Dorsolateral prefrontal cortex (tissue), 120 donors: ENCODE measurements at regions of chr17 and their contacts with region 1.

Region 1: GRCh38 chr17:1673041-1673785 is 11.5 kb downstream of the PRPF8 start:
- DNase-seq: peak in 1 of 10 donors; percentile 28
- H3K4me3 ChIP-seq: no peak overlapping the region
- H3K27ac ChIP-seq: peak overlapping the region in 1 of 59 donors; percentile 6
- H3K27me3 ChIP-seq: no peaks in the 10 kb centered on the region
- CTCF ChIP-seq: no peak

Region 2: GRCh38 chr17:996554-997344 is 676.5 kb before region 1 on chr17 and contains the start of gene TIMM22:
- intact Hi-C with region 1: no loop called
- DNase-seq: peak; percentile 88 to 94 (median 92)
- H3K4me3 ChIP-seq: peak within 1 kb of the TSS; percentile 64 to 100 (median 98)
- H3K27ac ChIP-seq: peak within 1 kb of the TSS; percentile 70 to 99 (median 95)
- H3K27me3 ChIP-seq: no peaks in the 10 kb centered on the region
- CTCF ChIP-seq: peak; percentile 58 to 92 (median 79)
- total RNA-seq, gene TIMM22: 7.3 to 15.5 (median 11.6) TPM

Region 3: GRCh38 chr17:1783834-1784611 is 110.8 kb after region 1 on chr17:
- intact Hi-C with region 1: loop called in 1 of 2 experiments (anchors 5 kb)
- DNase-seq: peak in 4 of 10 donors; percentile 22 to 61 (median 39)
- H3K4me3 ChIP-seq: peak overlapping the region in 15 of 59 donors; percentile 0 to 27 (median 12)
- H3K27ac ChIP-seq: peak overlapping the region; percentile 7 to 94 (median 82)
- H3K27me3 ChIP-seq: no peaks in the 10 kb centered on the region
- CTCF ChIP-seq: peak in 55 of 56 donors; percentile 42 to 80 (median 61)